Sciatic nerve (tissue), 2 donors: ENCODE measurements at regions of chr12 and their contacts with region 1.

Region 1: DNA sequence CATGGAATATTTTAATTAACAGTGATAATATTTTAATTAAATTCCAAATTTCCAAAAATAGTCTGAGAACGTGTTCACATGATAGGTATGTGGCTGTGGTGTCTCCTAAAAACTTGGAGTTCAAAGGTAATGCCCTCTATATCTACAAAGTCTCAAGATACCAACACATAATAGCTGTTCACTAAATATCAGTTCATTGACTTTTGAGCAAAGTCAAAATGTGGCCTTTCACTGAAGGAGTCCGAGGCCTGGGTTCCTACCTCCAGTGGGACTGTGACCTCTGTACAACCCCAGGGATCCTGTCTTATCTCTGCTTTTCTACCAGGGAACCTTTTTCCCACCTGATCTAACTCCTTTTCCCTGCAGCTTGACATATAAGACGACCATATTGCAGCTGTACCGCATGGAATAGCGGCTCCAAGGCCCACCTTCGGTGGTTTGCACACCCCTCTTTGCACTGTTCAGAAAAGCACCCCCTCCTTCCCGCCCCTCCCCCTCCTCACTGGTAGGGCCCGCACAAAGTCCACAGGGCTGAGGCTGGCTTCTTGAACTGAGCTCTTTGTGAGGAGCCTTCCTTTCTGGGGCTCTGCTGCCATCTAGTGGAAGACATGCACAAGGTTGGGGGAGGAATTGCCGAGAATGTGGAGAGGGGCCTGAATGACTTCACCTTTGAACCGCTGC is 3.1 kb downstream of the CCND2 start:
- DNase-seq: peak; percentile 91
- ATAC-seq: peak; percentile 62

Region 2: DNA sequence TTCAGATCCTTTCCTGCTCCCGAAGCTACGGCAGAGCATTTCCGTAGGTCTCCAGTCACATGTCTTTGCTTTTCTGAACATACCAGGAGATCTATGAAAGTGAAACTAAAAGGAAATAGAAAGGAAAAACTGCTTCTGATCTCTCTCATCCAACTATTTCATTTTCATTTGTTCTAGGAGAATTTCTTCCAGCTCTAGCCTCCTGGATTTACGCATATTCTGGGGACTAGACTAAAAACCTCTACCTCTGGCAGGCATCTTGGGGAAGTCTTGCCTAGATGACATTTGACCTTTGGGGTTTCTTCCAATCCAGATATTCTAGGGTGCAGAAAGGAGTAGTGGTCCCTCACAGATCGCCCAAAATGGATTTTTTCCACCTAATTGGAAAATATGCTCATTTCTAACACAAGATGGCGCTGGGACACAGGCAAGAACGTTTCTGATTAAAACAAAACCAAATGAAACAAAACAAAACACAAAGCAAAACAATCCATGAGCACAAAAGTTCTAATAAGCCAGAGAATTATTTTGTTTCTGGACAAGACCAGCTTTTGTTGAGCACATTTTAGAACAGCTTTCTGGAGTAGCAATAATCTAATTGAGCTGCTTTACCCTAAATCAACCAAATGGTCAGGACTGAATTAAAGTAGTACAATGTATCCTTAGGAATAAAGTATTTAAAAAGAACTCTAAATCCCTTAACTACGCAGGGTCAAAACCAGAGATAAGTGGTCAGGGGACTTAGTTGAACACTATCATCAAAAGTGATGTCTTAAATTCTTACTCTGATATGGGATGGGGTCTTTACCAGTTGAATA is 391.2 kb before region 1 on chr12:
- intact Hi-C with region 1: loop called (anchors 10 kb)
- DNase-seq: no peak
- ATAC-seq: peak; percentile 84

Region 3: GRCh38 chr12:4030929-4031702 is 245.5 kb before region 1 on chr12:
- intact Hi-C with region 1: loop called (anchors 10 kb)
- DNase-seq: peak; percentile 93
- ATAC-seq: peak; percentile 99